ENCODE measurements at regions of chr7 and their contacts with region 1.

Region 1: GRCh38 chr7:55641273-55641691 is 69.0 kb upstream of the VOPP1 start:
- DNase-seq: peak; percentile 17
- ATAC-seq: peak; percentile 97
- H3K4me3 Mint-ChIP-seq: no peak overlapping the region
- H3K27ac Mint-ChIP-seq: no peak overlapping the region
- H3K4me1 Mint-ChIP-seq: no peaks in the 10 kb centered on the region
- H3K27me3 Mint-ChIP-seq: peaks cover 4% of the 10 kb centered on the region
- CTCF ChIP-seq: no peak

Region 2: DNA sequence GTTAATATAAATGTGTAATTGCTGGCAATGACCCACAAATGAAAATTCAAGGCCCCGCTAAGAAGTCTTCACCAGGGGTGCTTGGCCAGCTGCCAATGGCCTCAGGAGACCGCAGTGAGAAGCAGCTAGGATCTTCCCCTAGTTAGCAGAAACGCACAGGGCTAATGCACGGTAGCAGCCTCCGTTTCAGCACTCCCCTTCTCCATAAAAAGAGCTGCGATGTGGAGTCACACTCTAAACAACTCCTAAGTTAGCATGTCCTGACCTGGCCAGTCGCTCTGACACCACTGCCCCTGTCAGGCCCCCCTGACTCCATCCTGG is 82.3 kb after region 1 on chr7:
- CTCF ChIA-PET with region 1: interaction called, 13 read pairs
- POLR2A ChIA-PET with region 1: no interaction called
- DNase-seq: no peak
- ATAC-seq: no peak
- H3K4me3 Mint-ChIP-seq: no peak overlapping the region
- H3K27ac Mint-ChIP-seq: no peak overlapping the region
- H3K4me1 Mint-ChIP-seq: no peaks in the 10 kb centered on the region
- H3K27me3 Mint-ChIP-seq: 0 out of 2 replicates have a peak, but pooled peaks cover 3% of the 10 kb centered on the region
- CTCF ChIP-seq: no peak

Measured in WTC11 (cell line).